Endothelial cell of umbilical vein (primary cell): ENCODE measurements at regions of chr2 and their contacts with region 1.

Region 1: GRCh38 chr2:186440537-186440936 is 45.5 kb upstream of the ZC3H15 start:
- DNase-seq: peak; percentile 78
- H3K4me3 ChIP-seq: peak overlapping the region in 1 of 3 experiments; percentile 23
- H3K27ac ChIP-seq: peak overlapping the region; percentile 44
- H3K4me1 ChIP-seq: peaks cover 9% of the 10 kb centered on the region
- H3K27me3 ChIP-seq: no peaks in the 10 kb centered on the region
- CTCF ChIP-seq: no peak
- POLR2A ChIP-seq: no peak

Region 2: DNA sequence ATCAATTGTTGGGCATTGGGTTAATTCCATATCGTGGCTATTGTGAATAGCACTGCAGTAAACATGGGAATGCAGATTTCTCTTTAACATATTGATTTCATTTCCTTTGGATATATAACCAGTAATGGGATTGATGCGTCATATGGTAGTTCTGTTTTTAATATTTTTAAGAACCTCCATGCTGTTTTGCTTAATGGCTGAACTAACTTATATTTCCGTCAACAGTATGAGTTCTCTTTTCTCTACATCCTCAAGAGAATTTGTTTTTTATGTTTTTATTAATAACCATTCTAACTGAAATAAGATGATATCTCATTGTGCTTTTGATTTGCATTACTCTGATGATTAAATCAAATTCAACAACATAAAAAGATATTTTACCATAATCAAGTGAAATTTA is 930.5 kb before region 1 on chr2:
- CTCF ChIA-PET with region 1: no interaction called
- POLR2A ChIA-PET with region 1: no interaction called
- dilution Hi-C with region 1: no loop called
- intact Hi-C with region 1: no loop called
- DNase-seq: no peak
- H3K4me3 ChIP-seq: no peak overlapping the region
- H3K27ac ChIP-seq: no peak overlapping the region
- H3K4me1 ChIP-seq: no peaks in the 10 kb centered on the region
- H3K27me3 ChIP-seq: no peaks in the 10 kb centered on the region
- CTCF ChIP-seq: no peak
- POLR2A ChIP-seq: no peak

Region 3: GRCh38 chr2:185875136-185875931 is 565.2 kb before region 1 on chr2:
- CTCF ChIA-PET with region 1: no interaction called
- POLR2A ChIA-PET with region 1: no interaction called
- dilution Hi-C with region 1: no loop called
- intact Hi-C with region 1: loop called (anchors 10 kb)
- DNase-seq: no peak
- H3K4me3 ChIP-seq: no peak overlapping the region
- H3K27ac ChIP-seq: no peak overlapping the region
- H3K4me1 ChIP-seq: no peaks in the 10 kb centered on the region
- H3K27me3 ChIP-seq: no peaks in the 10 kb centered on the region
- CTCF ChIP-seq: no peak
- POLR2A ChIP-seq: no peak

Region 4: GRCh38 chr2:186575302-186575701 is 134.8 kb after region 1 on chr2:
- CTCF ChIA-PET with region 1: no interaction called
- POLR2A ChIA-PET with region 1: no interaction called
- dilution Hi-C with region 1: no loop called
- intact Hi-C with region 1: no loop called
- DNase-seq: peak; percentile 98
- H3K4me3 ChIP-seq: no peak overlapping the region
- H3K27ac ChIP-seq: peak overlapping the region; percentile 82
- H3K4me1 ChIP-seq: peaks cover 24% of the 10 kb centered on the region
- H3K27me3 ChIP-seq: no peaks in the 10 kb centered on the region
- CTCF ChIP-seq: no peak
- POLR2A ChIP-seq: no peak

Region 5: GRCh38 chr2:186784930-186785329 is 344.4 kb after region 1 on chr2:
- CTCF ChIA-PET with region 1: no interaction called
- POLR2A ChIA-PET with region 1: no interaction called
- dilution Hi-C with region 1: no loop called
- intact Hi-C with region 1: no loop called
- DNase-seq: no peak
- H3K4me3 ChIP-seq: no peak overlapping the region
- H3K27ac ChIP-seq: no peak overlapping the region
- H3K4me1 ChIP-seq: no peaks in the 10 kb centered on the region
- H3K27me3 ChIP-seq: peaks cover 2 to 4% of the 10 kb centered on the region in 2 experiments
- CTCF ChIP-seq: no peak
- POLR2A ChIP-seq: no peak